ENCODE measurements at regions of chr3 and their contacts with region 1.

Region 1: GRCh38 chr3:71453822-71454511 is 129.6 kb downstream of the FOXP1 start:
- DNase-seq: peak; percentile 50 to 65
- H3K4me3 ChIP-seq: no peak overlapping the region
- H3K4me3 Mint-ChIP-seq: peak overlapping the region; percentile 64
- H3K27ac Mint-ChIP-seq: peak overlapping the region; percentile 86
- H3K4me1 ChIP-seq: peaks cover 64% of the 10 kb centered on the region
- H3K4me1 Mint-ChIP-seq: peaks cover 53% of the 10 kb centered on the region
- H3K27me3 ChIP-seq: no peaks in the 10 kb centered on the region
- H3K27me3 Mint-ChIP-seq: no peaks in the 10 kb centered on the region
- CTCF ChIP-seq: no peak

Region 2: GRCh38 chr3:71416876-71417275 is 37.1 kb before region 1 on chr3:
- CTCF ChIA-PET with region 1: interaction called, 3 read pairs
- POLR2A ChIA-PET with region 1: no interaction called
- intact Hi-C with region 1: loop called (anchors 1 kb)
- DNase-seq: peak; percentile 61 to 67
- H3K4me3 ChIP-seq: no peak overlapping the region
- H3K4me3 Mint-ChIP-seq: peak overlapping the region; percentile 63
- H3K27ac Mint-ChIP-seq: peak overlapping the region; percentile 96
- H3K4me1 ChIP-seq: peaks cover 38% of the 10 kb centered on the region
- H3K4me1 Mint-ChIP-seq: peaks cover 44% of the 10 kb centered on the region
- H3K27me3 ChIP-seq: no peaks in the 10 kb centered on the region
- H3K27me3 Mint-ChIP-seq: no peaks in the 10 kb centered on the region
- CTCF ChIP-seq: peak; percentile 35 to 39

Region 3: GRCh38 chr3:71482771-71483170 is 28.8 kb after region 1 on chr3:
- CTCF ChIA-PET with region 1: no interaction called
- POLR2A ChIA-PET with region 1: no interaction called
- intact Hi-C with region 1: no loop called
- DNase-seq: no peak
- H3K4me3 ChIP-seq: no peak overlapping the region
- H3K4me3 Mint-ChIP-seq: no peak overlapping the region
- H3K27ac Mint-ChIP-seq: no peak overlapping the region
- H3K4me1 ChIP-seq: no peaks in the 10 kb centered on the region
- H3K4me1 Mint-ChIP-seq: no peaks in the 10 kb centered on the region
- H3K27me3 ChIP-seq: no peaks in the 10 kb centered on the region
- H3K27me3 Mint-ChIP-seq: no peaks in the 10 kb centered on the region
- CTCF ChIP-seq: no peak

Region 4: DNA sequence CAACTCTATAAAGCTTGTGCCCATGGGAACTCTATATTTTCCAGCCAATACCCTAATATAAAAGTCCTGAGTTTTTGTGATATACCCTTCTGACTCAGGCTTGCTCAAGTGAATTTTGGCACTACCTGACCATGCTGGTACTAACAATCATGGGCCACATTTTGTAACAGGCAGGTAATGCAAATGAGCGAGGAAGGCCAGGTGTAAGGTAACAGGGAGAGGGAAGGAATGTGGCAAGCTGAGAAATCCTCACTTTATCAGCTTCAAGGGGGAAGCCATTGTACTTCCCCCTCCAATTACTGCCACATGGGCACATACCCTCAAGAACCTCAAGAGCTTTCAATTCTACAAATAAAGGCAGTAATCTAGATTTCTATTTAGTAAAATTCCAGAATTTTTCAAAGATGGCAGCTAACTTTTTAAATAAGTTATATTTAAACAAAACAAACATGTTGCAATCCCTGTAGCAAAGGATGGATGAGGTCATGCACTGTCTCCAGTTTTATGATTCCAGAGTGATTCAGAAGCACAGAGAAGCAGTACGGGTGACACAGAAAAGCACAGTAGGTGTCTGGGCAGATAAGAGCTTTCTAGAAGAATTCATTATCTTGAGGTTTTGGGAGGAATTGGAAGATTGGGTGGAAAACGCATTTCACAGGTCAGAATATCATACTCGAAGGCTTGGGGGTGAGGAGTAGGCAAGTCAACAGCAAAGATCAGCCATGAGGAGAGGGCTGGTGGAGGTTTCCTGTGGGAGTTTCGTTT is 41.9 kb after region 1 on chr3:
- CTCF ChIA-PET with region 1: no interaction called
- POLR2A ChIA-PET with region 1: no interaction called
- intact Hi-C with region 1: no loop called
- DNase-seq: peak in 1 of 2 experiments; percentile 18
- H3K4me3 ChIP-seq: no peak overlapping the region
- H3K4me3 Mint-ChIP-seq: peak overlapping the region; percentile 62
- H3K27ac Mint-ChIP-seq: peak overlapping the region; percentile 71
- H3K4me1 ChIP-seq: peaks cover 10% of the 10 kb centered on the region; the same call in 1 of the 2 replicates
- H3K4me1 Mint-ChIP-seq: peaks cover 32% of the 10 kb centered on the region
- H3K27me3 ChIP-seq: no peaks in the 10 kb centered on the region
- H3K27me3 Mint-ChIP-seq: no peaks in the 10 kb centered on the region
- CTCF ChIP-seq: no peak

Region 5: DNA sequence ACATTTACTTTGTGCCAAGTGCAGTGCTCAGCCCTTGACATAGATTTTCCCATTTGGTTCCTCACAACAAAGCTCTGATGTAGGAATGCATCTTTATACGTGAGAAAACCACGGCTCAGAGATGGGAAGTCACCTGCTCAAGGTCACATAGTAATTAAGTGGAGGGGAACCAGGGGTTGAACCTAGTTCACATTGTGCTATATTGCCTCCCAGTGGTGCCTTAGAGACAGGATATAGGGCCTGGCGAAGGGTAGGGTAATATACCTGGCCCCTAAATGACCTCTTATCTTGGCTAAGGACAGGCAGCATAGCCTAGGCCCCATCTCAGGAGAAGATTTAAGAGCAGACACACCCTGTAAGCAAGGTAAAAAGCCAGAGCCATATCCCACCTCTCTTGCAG is 58.0 kb after region 1 on chr3:
- CTCF ChIA-PET with region 1: interaction called, 10 read pairs
- POLR2A ChIA-PET with region 1: no interaction called
- intact Hi-C with region 1: no loop called
- DNase-seq: peak in 1 of 2 experiments; percentile 21
- H3K4me3 ChIP-seq: no peak overlapping the region
- H3K4me3 Mint-ChIP-seq: no peak overlapping the region
- H3K27ac Mint-ChIP-seq: no peak overlapping the region
- H3K4me1 ChIP-seq: peaks cover 9% of the 10 kb centered on the region
- H3K4me1 Mint-ChIP-seq: peaks cover 5% of the 10 kb centered on the region
- H3K27me3 ChIP-seq: no peaks in the 10 kb centered on the region
- H3K27me3 Mint-ChIP-seq: no peaks in the 10 kb centered on the region
- CTCF ChIP-seq: no peak

Region 6: DNA sequence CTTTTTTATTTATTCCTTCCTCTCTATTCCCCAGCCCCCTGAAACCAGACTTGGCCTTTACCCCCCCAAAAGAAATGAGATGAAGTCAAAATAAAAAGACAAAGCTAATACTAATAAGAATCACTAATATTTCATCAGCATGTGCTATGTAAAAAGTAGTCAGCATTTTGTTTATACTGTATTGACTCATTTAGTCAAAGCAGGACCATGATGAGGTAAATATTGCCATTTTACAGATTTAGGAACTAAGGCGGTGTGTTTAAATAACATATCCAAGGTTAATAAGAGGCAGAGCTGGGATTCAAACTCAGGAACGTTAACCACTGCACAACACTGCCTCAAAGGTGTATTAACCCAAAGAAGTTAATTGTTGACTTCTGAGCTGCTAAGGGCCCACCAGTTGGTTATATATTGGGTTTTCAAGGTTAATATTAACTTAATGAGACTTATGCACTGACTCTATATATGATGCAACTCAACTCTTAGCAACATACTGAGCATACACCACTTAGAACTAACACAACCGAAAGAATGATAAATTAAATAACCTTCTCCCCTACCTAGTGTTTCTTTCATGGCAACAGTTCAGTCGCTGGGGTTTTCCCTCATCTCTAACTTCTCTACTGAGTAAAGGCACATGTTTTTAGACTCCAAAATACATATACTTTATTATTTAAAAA is 94.9 kb after region 1 on chr3:
- CTCF ChIA-PET with region 1: no interaction called
- POLR2A ChIA-PET with region 1: no interaction called
- intact Hi-C with region 1: loop called (anchors 1 kb)
- DNase-seq: no peak
- H3K4me3 ChIP-seq: no peak overlapping the region
- H3K4me3 Mint-ChIP-seq: no peak overlapping the region
- H3K27ac Mint-ChIP-seq: peak overlapping the region; percentile 76
- H3K4me1 ChIP-seq: peaks cover 33% of the 10 kb centered on the region
- H3K4me1 Mint-ChIP-seq: peaks cover 14% of the 10 kb centered on the region
- H3K27me3 ChIP-seq: no peaks in the 10 kb centered on the region
- H3K27me3 Mint-ChIP-seq: no peaks in the 10 kb centered on the region
- CTCF ChIP-seq: no peak

Measured in Caco-2 (cell line).